ENCODE measurements at regions of chr2 and their contacts with region 1.

Region 1: GRCh38 chr2:177056481-177056929 is 156.1 kb upstream of the HNRNPA3 start:
- DNase-seq: no peak
- CTCF ChIP-seq: no peak

Region 2: DNA sequence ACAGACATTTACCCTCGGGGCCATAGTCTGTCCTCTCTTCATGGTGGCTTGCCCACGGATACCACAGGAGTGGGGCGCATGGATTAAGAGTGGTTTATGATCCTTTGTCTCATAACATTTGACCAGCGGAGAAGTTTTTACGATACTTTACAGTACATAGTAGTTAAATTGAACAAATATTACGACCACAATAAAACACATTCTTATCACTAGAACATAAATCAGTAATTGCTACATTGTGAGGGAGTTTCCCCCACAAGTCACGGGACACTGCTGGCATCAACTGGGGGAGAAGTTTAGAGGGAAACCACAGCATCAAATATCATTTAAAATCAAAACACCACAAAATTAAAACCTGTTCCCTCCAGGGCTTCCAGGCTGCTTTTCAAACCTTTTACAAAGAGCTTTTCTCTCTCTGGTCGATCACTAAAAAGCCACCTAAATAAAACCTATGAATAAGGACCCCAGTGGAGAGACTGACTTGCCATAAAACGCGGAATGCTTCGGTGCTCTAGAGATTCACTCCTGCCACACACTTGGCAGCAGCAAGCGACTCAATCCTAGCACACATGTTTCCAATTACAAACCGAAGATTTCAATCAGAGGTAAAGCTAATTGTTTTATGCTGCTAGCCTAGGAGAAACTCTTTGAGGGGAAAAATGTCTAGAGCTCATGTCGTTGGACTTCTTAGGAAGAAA is 17.6 kb before region 1 on chr2:
- CTCF ChIA-PET with region 1: interaction called, 35 read pairs
- POLR2A ChIA-PET with region 1: no interaction called
- DNase-seq: no peak
- CTCF ChIP-seq: no peak

Region 3: GRCh38 chr2:177044671-177045070 is 11.8 kb before region 1 on chr2:
- CTCF ChIA-PET with region 1: interaction called, 35 read pairs
- POLR2A ChIA-PET with region 1: no interaction called
- DNase-seq: no peak
- CTCF ChIP-seq: no peak

Region 4: GRCh38 chr2:177772529-177772928 is 716.0 kb after region 1 on chr2:
- CTCF ChIA-PET with region 1: no interaction called
- POLR2A ChIA-PET with region 1: no interaction called
- DNase-seq: peak; percentile 22
- CTCF ChIP-seq: peak; percentile 11

Measured in GM10248 (cell line).